Adrenal gland (tissue), 19 donors: ENCODE measurements at regions of chr1 and their contacts with region 1.

Region 1: DNA sequence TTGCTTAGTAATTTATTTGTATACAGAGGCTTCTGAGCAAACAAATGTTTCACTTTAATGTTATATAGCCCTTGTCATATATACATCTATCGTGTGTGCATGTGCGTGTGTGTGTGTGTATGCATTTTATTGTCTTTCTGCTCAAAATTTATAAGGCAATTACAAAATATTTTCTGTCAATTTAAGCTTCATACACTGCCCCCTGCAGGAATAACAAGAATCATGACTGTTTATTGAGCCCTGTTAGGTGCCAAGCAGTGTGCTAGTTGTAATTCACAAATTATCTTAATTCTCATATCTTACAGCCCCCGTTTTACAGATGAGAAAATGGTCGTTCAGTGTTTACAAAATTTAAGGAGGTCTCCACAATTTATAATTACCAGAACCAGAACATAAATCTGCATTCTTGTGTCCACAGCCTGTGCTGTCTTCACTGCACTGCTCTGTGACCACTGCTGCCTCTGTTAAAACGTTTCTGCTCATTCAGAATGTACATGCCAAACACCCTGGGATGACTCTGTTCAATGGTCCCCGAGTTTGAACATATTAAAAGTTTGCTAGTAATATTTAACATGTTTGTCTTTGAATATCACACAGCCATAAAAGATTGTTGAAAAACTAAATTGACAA is 181.3 kb downstream of the ATP6V1G3 start:
- DNase-seq: no peak
- H3K4me3 ChIP-seq: no peak overlapping the region
- H3K27ac ChIP-seq: no peak overlapping the region
- H3K4me1 ChIP-seq: no peaks in the 10 kb centered on the region
- H3K27me3 ChIP-seq: no peaks in the 10 kb centered on the region
- CTCF ChIP-seq: peak; percentile 25 to 62 (median 56)
- POLR2A ChIP-seq: no peak

Region 2: GRCh38 chr1:198042168-198042567 is 317.0 kb before region 1 on chr1:
- intact Hi-C with region 1: no loop called
- DNase-seq: no peak
- H3K4me3 ChIP-seq: no peak overlapping the region
- H3K27ac ChIP-seq: no peak overlapping the region
- H3K4me1 ChIP-seq: no peaks in the 10 kb centered on the region
- H3K27me3 ChIP-seq: no peaks in the 10 kb centered on the region
- CTCF ChIP-seq: no peak
- POLR2A ChIP-seq: no peak

Region 3: DNA sequence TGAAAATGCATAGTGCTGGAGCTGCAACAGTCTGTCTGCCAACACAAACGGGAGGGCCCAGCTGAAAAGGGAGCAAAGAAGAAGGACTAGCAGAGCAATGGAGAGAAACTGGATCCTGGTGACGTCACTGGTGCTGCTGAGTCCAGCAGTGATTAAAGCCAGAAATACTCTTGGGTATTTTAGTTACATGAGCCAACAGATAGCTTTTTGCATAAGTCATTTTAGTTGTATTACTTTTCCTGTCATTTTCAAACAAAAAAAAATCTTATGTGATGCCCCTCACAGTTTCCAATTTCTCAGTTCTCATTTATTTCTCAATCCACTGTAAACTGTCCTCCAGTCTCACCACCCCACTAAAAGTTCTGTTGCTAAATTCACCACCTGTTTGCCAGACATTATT is 241.0 kb before region 1 on chr1:
- intact Hi-C with region 1: no loop called
- DNase-seq: peak; percentile 33 to 86 (median 73)
- H3K4me3 ChIP-seq: peak overlapping the region in 1 of 4 donors; percentile 10
- H3K27ac ChIP-seq: peak overlapping the region in 1 of 5 donors; percentile 14
- H3K4me1 ChIP-seq: peaks cover 3 to 22% of the 10 kb centered on the region in 2 donors
- H3K27me3 ChIP-seq: no peaks in the 10 kb centered on the region
- CTCF ChIP-seq: no peak
- POLR2A ChIP-seq: no peak

Region 4: GRCh38 chr1:198157241-198157846 is 201.8 kb before region 1 on chr1:
- intact Hi-C with region 1: loop called in 1 of 2 experiments (anchors 10 kb)
- DNase-seq: peak; percentile 86 to 97 (median 91)
- H3K4me3 ChIP-seq: peak overlapping the region; percentile 39 to 99 (median 98)
- H3K27ac ChIP-seq: peak overlapping the region; percentile 88 to 98 (median 93)
- H3K4me1 ChIP-seq: peaks cover 17 to 36% of the 10 kb centered on the region in 2 donors
- H3K27me3 ChIP-seq: no peaks in the 10 kb centered on the region
- CTCF ChIP-seq: peak in 1 of 6 experiments; percentile 0
- POLR2A ChIP-seq: peak in 1 of 2 donors; percentile 61